ENCODE measurements at regions of chr21 and their contacts with region 1.

Region 1: DNA sequence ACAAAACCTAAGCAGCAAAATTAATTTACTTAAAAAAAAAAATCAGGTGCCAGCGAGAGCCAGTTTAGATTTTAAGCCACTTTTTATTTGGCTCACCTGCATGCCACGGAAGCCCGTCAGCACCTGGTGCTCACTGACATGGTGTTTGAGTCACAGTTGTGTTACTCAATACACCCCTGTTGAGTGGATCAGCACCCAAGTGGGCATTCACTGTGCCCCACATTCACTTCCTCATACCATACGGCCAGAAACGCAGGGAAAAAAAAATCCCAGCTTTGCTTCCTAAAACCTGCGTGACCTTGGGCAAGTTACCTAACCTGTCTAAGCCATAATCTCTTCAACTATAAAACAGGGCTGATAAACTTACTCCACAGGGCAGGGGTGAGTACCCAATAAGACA is 42.8 kb upstream of the SIM2 start:
- DNase-seq: no peak
- H3K4me3 ChIP-seq: no peak overlapping the region
- H3K27ac ChIP-seq: peak overlapping the region in 1 of 59 donors; percentile 89
- H3K27me3 ChIP-seq: peaks cover 0 to 36% (median 10%) of the 10 kb centered on the region in 45 donors
- CTCF ChIP-seq: no peak

Region 2: GRCh38 chr21:36504067-36505058 is 151.8 kb before region 1 on chr21:
- intact Hi-C with region 1: loop called in 1 of 2 experiments (anchors 10 kb)
- DNase-seq: peak in 2 of 10 donors; percentile 37 to 43
- H3K4me3 ChIP-seq: no peak overlapping the region
- H3K27ac ChIP-seq: no peak overlapping the region
- H3K27me3 ChIP-seq: peaks cover 0 to under 1% (median 0%) of the 10 kb centered on the region in 45 donors
- CTCF ChIP-seq: peak; percentile 83 to 99 (median 95)

Region 3: DNA sequence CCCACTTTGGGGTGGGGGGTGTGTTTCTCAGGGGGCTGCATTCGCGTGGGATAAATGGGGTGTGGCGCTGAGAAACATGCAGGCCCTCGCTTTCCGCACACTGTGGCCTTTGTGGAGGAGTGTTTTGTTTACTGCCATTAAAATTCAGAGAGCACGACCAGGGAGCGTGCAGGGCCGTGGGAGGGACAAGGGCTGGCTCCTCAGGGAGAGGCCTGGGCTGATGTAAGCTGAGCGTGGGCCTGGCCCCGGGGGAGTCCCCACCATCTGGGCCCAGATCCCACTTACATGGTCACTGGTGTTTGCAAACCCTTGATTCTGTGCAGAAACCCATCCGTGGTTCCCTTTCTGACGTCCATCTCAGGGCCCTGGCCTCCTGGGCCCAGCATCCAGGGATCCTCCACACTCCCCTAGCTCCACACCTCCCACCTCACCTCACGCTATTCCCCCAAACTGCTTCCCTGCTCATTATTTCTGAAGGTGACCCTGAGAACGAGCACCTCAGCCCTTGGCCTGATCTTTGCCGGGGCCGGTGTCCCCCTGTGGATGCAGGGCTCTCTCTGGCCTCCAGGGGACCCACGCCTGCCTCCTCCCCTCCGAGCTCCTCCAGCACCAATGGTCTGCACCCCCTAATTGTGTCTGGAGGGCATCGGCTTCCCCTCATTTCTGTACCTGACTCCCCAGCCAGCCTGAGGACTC is 49.7 kb before region 1 on chr21:
- intact Hi-C with region 1: no loop called
- DNase-seq: peak in 2 of 10 donors; percentile 12 to 46
- H3K4me3 ChIP-seq: no peak overlapping the region
- H3K27ac ChIP-seq: peak overlapping the region in 3 of 59 donors; percentile 10 to 36 (median 14)
- H3K27me3 ChIP-seq: peaks cover 0 to 15% (median 0%) of the 10 kb centered on the region in 45 donors
- CTCF ChIP-seq: no peak

Region 4: DNA sequence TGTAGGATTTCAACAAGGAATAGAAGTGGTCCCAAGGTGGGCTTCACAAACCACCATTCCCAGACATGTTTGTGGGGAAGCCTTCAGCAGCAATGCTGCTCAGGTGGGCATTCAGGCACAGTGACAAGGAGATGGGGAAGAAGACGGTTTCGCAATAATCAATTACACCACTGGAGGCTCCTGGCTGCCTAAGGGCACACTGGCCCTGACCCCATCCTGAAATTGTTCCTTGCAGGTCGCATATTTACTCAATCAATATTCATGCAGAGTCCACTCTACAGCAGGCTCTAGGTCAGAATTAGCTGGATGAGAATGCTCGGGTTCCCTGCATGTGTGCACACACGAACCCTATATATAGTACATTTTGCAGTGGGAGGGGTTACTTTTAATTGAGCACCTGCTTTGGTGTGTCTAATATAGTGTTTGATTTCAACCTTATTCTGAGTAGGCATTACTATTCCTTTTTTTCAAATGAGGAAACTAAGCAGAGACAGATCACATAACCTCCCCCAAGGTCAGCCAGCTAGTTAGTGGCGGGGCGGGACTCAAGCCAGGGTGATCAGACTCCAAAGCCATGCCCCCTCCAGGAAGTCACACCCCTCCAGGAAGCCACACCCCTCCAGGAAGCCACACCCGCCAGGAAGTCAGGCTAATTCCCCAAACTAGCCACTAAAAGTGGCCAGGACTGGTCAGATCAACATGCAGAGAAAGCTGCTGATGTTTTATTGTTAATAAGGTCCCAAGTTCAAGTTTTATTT is 203.8 kb after region 1 on chr21:
- intact Hi-C with region 1: loop called in 1 of 2 experiments (anchors 5 kb)
- DNase-seq: no peak
- H3K4me3 ChIP-seq: no peak overlapping the region
- H3K27ac ChIP-seq: no peak overlapping the region
- H3K27me3 ChIP-seq: no peaks in the 10 kb centered on the region
- CTCF ChIP-seq: no peak

Measured in dorsolateral prefrontal cortex (tissue), 120 donors.